Naive thymus-derived CD4-positive, alpha-beta T cell (primary cell): ENCODE measurements at regions of chr6 and their contacts with region 1.

Region 1: DNA sequence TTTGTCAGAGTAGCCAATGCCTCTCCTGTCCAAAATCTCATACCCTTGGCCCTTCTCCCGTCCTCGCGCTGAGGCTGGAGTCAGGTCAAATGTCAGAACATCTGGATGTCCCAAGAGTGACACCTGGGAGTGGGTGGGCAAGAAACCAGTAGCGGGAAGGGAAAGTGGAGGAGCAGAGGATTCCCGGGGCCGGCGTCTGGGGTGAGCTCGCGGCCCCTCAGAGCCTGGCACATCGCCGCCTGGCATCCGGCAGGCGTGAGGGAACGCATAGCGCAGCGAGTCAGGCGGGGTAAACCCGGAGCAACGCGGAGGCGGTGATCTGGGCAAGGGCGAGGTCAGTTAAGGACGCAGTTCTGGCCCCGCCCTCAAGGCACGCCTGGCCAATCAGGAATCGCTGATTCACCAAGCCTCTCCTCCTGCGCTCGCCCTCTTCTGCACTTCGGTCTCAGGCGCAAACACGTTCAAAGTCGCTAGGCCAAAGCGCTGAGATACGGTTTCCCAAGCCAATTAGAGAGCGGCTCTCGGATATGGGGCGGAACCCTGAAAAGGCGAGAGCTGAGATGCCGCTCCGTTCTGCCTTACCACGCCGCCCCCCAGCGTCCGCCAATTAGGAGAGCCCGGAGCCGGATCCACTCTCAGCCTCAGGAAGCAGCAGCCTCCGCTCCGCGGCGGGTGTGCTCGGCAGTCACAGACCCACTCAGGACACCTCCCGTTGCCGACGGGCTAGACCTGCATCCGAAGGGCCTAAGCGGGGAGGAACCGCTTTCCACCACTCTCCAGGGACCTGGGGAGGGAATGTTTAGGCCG is 22.5 kb downstream of the VPS52 start:
- DNase-seq: peak; percentile 79 to 97 (median 94)
- ATAC-seq: peak; percentile 91
- H3K4me3 ChIP-seq: peak overlapping the region; percentile 81
- H3K4me3 Mint-ChIP-seq: peak overlapping the region; percentile 81 to 94 (median 90)
- H3K27ac ChIP-seq: peak overlapping the region; percentile 96
- H3K27ac Mint-ChIP-seq: peak overlapping the region; percentile 82 to 98 (median 94)
- H3K4me1 ChIP-seq: peaks cover 11 to 15% of the 10 kb centered on the region in 2 donors
- H3K4me1 Mint-ChIP-seq: peaks cover 26 to 43% (median 35%) of the 10 kb centered on the region in 7 donors
- H3K27me3 ChIP-seq: no peaks in the 10 kb centered on the region
- H3K27me3 Mint-ChIP-seq: peaks cover 0 to 4% (median 0%) of the 10 kb centered on the region in 5 donors

Region 2: GRCh38 chr6:33014841-33015634 is 234.1 kb before region 1 on chr6:
- CTCF ChIA-PET with region 1: interaction called, 10 read pairs
- POLR2A ChIA-PET with region 1: interaction called, 6 read pairs
- intact Hi-C with region 1: loop called (anchors 1 kb)
- DNase-seq: peak in 7 of 9 donors; percentile 60 to 82 (median 75)
- ATAC-seq: peak; percentile 78
- H3K4me3 ChIP-seq: no peak overlapping the region
- H3K4me3 Mint-ChIP-seq: peak overlapping the region in 1 of 10 donors; percentile 0
- H3K27ac ChIP-seq: no peak overlapping the region
- H3K27ac Mint-ChIP-seq: peak overlapping the region in 1 of 9 donors; percentile 5
- H3K4me1 ChIP-seq: peaks cover 12 to 24% of the 10 kb centered on the region in 2 donors
- H3K4me1 Mint-ChIP-seq: peaks cover 8 to 38% (median 26%) of the 10 kb centered on the region in 7 donors
- H3K27me3 ChIP-seq: no peaks in the 10 kb centered on the region
- H3K27me3 Mint-ChIP-seq: peaks cover 0 to 22% (median 2%) of the 10 kb centered on the region in 5 donors

Region 3: DNA sequence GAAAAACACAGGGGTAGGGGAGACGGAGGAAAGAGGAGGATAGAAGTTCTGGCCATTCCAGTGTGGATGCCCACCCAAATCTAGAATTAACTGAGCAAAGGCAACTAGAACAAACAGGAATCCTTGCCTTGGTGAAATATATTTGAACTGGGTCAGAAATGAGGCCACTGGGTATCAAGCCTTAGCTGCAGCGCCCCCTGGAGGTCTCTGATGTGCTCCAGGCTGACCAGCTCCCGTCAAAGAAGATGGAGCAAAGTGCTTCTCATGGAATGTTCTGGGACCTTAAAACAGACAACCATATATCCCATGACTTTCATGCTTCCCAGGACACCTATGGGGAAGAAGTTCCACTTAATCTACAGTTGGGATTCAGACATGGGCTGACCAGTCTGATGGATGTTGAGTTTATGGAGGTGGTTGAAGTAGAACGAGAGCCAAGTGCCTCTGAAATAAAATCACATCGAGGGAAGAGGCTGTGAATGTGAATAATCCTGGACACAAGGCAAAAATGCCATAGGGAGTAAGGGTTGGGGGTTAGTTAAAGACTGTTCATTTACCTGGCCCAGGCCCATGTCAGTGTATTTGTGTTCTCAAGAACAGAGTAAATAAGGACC is 122.9 kb before region 1 on chr6:
- CTCF ChIA-PET with region 1: interaction called, 9 read pairs
- POLR2A ChIA-PET with region 1: interaction called, 3 read pairs
- intact Hi-C with region 1: loop called (anchors 1 kb)
- DNase-seq: peak in 7 of 9 donors; percentile 10 to 67 (median 33)
- ATAC-seq: peak; percentile 65
- H3K4me3 ChIP-seq: no peak overlapping the region
- H3K4me3 Mint-ChIP-seq: no peak overlapping the region
- H3K27ac ChIP-seq: no peak overlapping the region
- H3K27ac Mint-ChIP-seq: no peak overlapping the region
- H3K4me1 ChIP-seq: no peaks in the 10 kb centered on the region
- H3K4me1 Mint-ChIP-seq: peaks cover 0 to 25% (median 0%) of the 10 kb centered on the region in 7 donors
- H3K27me3 ChIP-seq: no peaks in the 10 kb centered on the region
- H3K27me3 Mint-ChIP-seq: peaks cover 6 to 18% (median 11%) of the 10 kb centered on the region in 5 donors

Region 4: GRCh38 chr6:33264015-33264414 is 14.9 kb after region 1 on chr6:
- CTCF ChIA-PET with region 1: interaction called, 24 read pairs
- POLR2A ChIA-PET with region 1: interaction called, 101 read pairs
- intact Hi-C with region 1: no loop called
- DNase-seq: no peak
- ATAC-seq: no peak
- H3K4me3 ChIP-seq: no peak overlapping the region
- H3K4me3 Mint-ChIP-seq: no peak overlapping the region
- H3K27ac ChIP-seq: no peak overlapping the region
- H3K27ac Mint-ChIP-seq: peak overlapping the region in 2 of 9 donors; percentile 25 to 41
- H3K4me1 ChIP-seq: no peaks in the 10 kb centered on the region
- H3K4me1 Mint-ChIP-seq: peaks cover 0 to 22% (median 8%) of the 10 kb centered on the region in 7 donors
- H3K27me3 ChIP-seq: no peaks in the 10 kb centered on the region
- H3K27me3 Mint-ChIP-seq: no peaks in the 10 kb centered on the region

Region 5: GRCh38 chr6:33288921-33289748 is 40.0 kb after region 1 on chr6 and contains the starts of genes PFDN6 and WDR46:
- CTCF ChIA-PET with region 1: interaction called, 3 read pairs
- POLR2A ChIA-PET with region 1: interaction called, 8 read pairs
- intact Hi-C with region 1: loop called in 1 of 2 experiments (anchors 1 kb)
- DNase-seq: peak; percentile 55 to 90 (median 87)
- ATAC-seq: peak; percentile 96
- H3K4me3 ChIP-seq: peak within 1 kb of the TSS; percentile 97
- H3K4me3 Mint-ChIP-seq: peak within 1 kb of the TSS; percentile 89 to 99 (median 98)
- H3K27ac ChIP-seq: peak within 1 kb of the TSS; percentile 80
- H3K27ac Mint-ChIP-seq: peak within 1 kb of the TSS; percentile 89 to 98 (median 92)
- H3K4me1 ChIP-seq: peaks cover 19 to 20% of the 10 kb centered on the region in 2 donors
- H3K4me1 Mint-ChIP-seq: peaks cover 32 to 51% (median 45%) of the 10 kb centered on the region in 7 donors
- H3K27me3 ChIP-seq: no peaks in the 10 kb centered on the region
- H3K27me3 Mint-ChIP-seq: no peaks in the 10 kb centered on the region
- total RNA-seq, gene PFDN6: 14.6 to 73.2 (median 35.5) TPM
- total RNA-seq, gene WDR46: 25.3 to 62.7 (median 52.7) TPM

Region 6: DNA sequence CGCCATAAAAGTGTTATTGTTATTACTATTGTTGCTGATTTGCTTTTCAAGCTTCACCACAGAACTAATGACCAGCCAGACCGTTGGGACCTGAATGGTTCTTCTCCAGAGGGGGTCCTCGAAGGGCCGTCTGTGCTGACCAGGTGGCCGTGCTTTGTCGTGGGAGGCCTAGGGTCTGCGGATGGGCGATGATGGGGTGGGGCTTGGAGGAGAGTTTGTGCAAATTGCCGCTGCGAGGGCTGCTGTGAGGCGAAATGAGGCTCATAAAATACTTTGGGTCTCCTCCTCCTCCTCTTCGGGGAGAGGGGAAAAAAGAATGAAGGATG is 74.5 kb after region 1 on chr6:
- CTCF ChIA-PET with region 1: no interaction called
- POLR2A ChIA-PET with region 1: interaction called, 17 read pairs
- intact Hi-C with region 1: loop called (anchors 1 kb)
- DNase-seq: peak in 1 of 9 donors; percentile 26
- ATAC-seq: no peak
- H3K4me3 ChIP-seq: peak overlapping the region; percentile 64
- H3K4me3 Mint-ChIP-seq: peak overlapping the region; percentile 81 to 100 (median 98)
- H3K27ac ChIP-seq: peak overlapping the region; percentile 84
- H3K27ac Mint-ChIP-seq: peak overlapping the region; percentile 89 to 99 (median 97)
- H3K4me1 ChIP-seq: peaks cover 41% of the 10 kb centered on the region in 2 donors
- H3K4me1 Mint-ChIP-seq: peaks cover 34 to 59% (median 53%) of the 10 kb centered on the region in 7 donors
- H3K27me3 ChIP-seq: no peaks in the 10 kb centered on the region
- H3K27me3 Mint-ChIP-seq: peaks cover 0 to 4% (median 0%) of the 10 kb centered on the region in 5 donors

Region 7: GRCh38 chr6:33535104-33535603 is 286.0 kb after region 1 on chr6:
- CTCF ChIA-PET with region 1: no interaction called
- POLR2A ChIA-PET with region 1: no interaction called
- intact Hi-C with region 1: loop called in 1 of 2 experiments (anchors 1 kb)
- DNase-seq: no peak
- ATAC-seq: no peak
- H3K4me3 ChIP-seq: no peak overlapping the region
- H3K4me3 Mint-ChIP-seq: no peak overlapping the region
- H3K27ac ChIP-seq: no peak overlapping the region
- H3K27ac Mint-ChIP-seq: peak overlapping the region in 3 of 9 donors; percentile 9 to 74 (median 50)
- H3K4me1 ChIP-seq: peaks cover 0 to 10% of the 10 kb centered on the region in 2 donors
- H3K4me1 Mint-ChIP-seq: peaks cover 9 to 32% (median 27%) of the 10 kb centered on the region in 7 donors
- H3K27me3 ChIP-seq: no peaks in the 10 kb centered on the region
- H3K27me3 Mint-ChIP-seq: peaks cover 0 to 2% (median 0%) of the 10 kb centered on the region in 5 donors

Region 8: GRCh38 chr6:34157851-34158250 is 908.7 kb after region 1 on chr6:
- CTCF ChIA-PET with region 1: no interaction called
- POLR2A ChIA-PET with region 1: no interaction called
- intact Hi-C with region 1: no loop called
- DNase-seq: no peak
- ATAC-seq: no peak
- H3K4me3 ChIP-seq: no peak overlapping the region
- H3K4me3 Mint-ChIP-seq: no peak overlapping the region
- H3K27ac ChIP-seq: no peak overlapping the region
- H3K27ac Mint-ChIP-seq: no peak overlapping the region
- H3K4me1 ChIP-seq: peaks cover 3 to 9% of the 10 kb centered on the region in 2 donors
- H3K4me1 Mint-ChIP-seq: peaks cover 0 to 10% (median 5%) of the 10 kb centered on the region in 7 donors
- H3K27me3 ChIP-seq: peaks cover 0 to 6% of the 10 kb centered on the region in 2 donors
- H3K27me3 Mint-ChIP-seq: peaks cover 0 to 53% (median 5%) of the 10 kb centered on the region in 5 donors